ENCODE measurements at regions of chr1 and their contacts with region 1.

Region 1: DNA sequence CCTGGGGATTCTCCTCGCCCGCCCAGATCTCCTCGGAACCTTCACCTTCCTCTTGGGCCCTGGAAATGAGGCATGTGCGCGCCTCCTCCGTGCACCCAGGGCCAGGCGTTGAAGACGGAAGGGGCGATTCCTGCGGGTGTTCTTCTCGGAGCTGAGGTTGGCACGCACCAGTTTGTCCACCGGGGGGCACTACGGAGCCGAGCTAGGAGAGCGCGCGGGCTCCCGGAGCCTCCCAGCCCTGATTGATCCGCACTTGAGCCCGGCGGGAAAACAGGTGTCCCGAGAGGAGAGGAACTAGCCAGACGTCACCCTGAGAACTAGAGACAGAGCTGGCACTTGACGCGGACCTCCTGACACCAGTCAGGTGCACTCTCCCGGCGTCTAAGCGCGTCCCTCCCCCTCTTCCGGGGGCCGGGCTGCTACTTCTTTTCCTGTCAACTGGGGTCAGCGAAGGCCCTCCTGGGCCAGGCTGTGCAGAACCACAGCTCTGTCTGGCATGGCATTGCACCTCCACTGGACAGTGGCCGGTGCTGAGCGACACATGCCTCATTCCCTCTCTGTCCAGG is 18.3 kb upstream of the SERINC2 start:
- DNase-seq: peak; percentile 94
- H3K4me3 Mint-ChIP-seq: peak overlapping the region; percentile 61
- H3K27ac Mint-ChIP-seq: no peak overlapping the region
- H3K4me1 Mint-ChIP-seq: peaks cover 27% of the 10 kb centered on the region
- H3K27me3 Mint-ChIP-seq: no peaks in the 10 kb centered on the region
- CTCF ChIP-seq: peak; percentile 76

Region 2: GRCh38 chr1:31372961-31373896 is 21.5 kb before region 1 on chr1 and contains the start of gene FABP3:
- CTCF ChIA-PET with region 1: interaction called, 11 read pairs
- intact Hi-C with region 1: no loop called
- DNase-seq: peak; percentile 62
- H3K4me3 Mint-ChIP-seq: peak within 1 kb of the TSS; percentile 52
- H3K27ac Mint-ChIP-seq: no peak within 1 kb of the TSS
- H3K4me1 Mint-ChIP-seq: peaks cover 39% of the 10 kb centered on the region
- H3K27me3 Mint-ChIP-seq: no peaks in the 10 kb centered on the region
- CTCF ChIP-seq: no peak
- total RNA-seq, gene FABP3: not detected in 2 replicates

Region 3: GRCh38 chr1:31422505-31423319 is 28.0 kb after region 1 on chr1:
- CTCF ChIA-PET with region 1: interaction called, 20 read pairs
- intact Hi-C with region 1: loop called (anchors 1 kb)
- DNase-seq: peak; percentile 90
- H3K4me3 Mint-ChIP-seq: no peak overlapping the region
- H3K27ac Mint-ChIP-seq: peak overlapping the region; percentile 80
- H3K4me1 Mint-ChIP-seq: peaks cover 35% of the 10 kb centered on the region
- H3K27me3 Mint-ChIP-seq: no peaks in the 10 kb centered on the region
- CTCF ChIP-seq: peak; percentile 79

Region 4: GRCh38 chr1:31460027-31460426 is 65.3 kb after region 1 on chr1:
- CTCF ChIA-PET with region 1: no interaction called
- intact Hi-C with region 1: no loop called
- DNase-seq: no peak
- H3K4me3 Mint-ChIP-seq: no peak overlapping the region
- H3K27ac Mint-ChIP-seq: no peak overlapping the region
- H3K4me1 Mint-ChIP-seq: no peaks in the 10 kb centered on the region
- H3K27me3 Mint-ChIP-seq: peaks cover 16% of the 10 kb centered on the region
- CTCF ChIP-seq: no peak

Region 5: GRCh38 chr1:31501215-31501904 is 106.6 kb after region 1 on chr1:
- CTCF ChIA-PET with region 1: no interaction called
- intact Hi-C with region 1: no loop called
- DNase-seq: no peak
- H3K4me3 Mint-ChIP-seq: no peak overlapping the region
- H3K27ac Mint-ChIP-seq: no peak overlapping the region
- H3K4me1 Mint-ChIP-seq: no peaks in the 10 kb centered on the region
- H3K27me3 Mint-ChIP-seq: peaks cover 12% of the 10 kb centered on the region
- CTCF ChIP-seq: peak; percentile 20

Region 6: DNA sequence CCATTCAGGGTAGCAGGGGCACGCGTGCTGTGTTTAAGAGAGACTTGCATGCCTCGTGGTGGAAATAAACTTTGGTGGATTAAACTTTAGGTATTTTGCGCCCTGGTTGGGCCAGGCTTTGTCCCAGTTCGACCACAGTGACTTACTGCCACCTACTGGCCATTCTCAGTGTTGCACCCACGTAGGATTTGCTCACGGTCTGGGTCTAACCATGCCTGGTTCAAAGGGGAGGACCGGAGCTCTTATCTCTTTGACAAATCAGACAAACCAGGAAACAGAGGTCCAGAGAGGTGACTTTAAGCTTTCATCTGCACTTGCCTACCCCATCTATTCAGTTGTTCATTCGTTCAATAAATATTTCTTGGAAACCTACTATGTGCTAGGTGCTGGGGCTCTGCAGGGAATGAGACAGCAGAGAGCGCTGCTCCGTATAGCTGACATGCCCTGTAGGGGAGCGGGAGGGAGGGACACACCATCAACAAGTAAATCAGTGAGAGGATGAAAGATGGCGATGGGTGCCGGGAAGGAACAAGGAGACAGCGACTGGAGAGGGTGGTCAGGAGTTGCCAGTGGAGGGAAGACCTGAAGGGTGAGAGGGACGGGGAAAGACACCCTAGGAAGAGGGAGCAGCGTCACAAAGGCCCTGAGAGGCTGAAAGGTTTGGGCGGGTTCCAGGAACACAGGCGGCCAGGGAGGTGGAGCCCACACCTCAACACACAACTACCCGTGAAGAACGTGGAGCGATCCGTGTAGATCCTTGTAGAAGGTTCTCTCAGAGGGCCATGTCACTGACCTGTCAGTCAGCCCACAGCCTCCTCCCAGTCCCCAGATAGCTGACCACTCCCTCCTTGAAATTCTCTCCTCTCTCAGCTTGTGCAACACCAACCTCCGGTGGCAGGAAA is 154.4 kb after region 1 on chr1:
- CTCF ChIA-PET with region 1: interaction called, 38 read pairs
- intact Hi-C with region 1: loop called (anchors 1 kb)
- DNase-seq: peak; percentile 93
- H3K4me3 Mint-ChIP-seq: peak overlapping the region; percentile 64
- H3K27ac Mint-ChIP-seq: peak overlapping the region; percentile 69
- H3K4me1 Mint-ChIP-seq: peaks cover 7% of the 10 kb centered on the region
- H3K27me3 Mint-ChIP-seq: no peaks in the 10 kb centered on the region
- CTCF ChIP-seq: peak; percentile 91

Measured in Calu3 (cell line).